Naive thymus-derived CD4-positive, alpha-beta T cell (primary cell): ENCODE measurements at regions of chr11 and their contacts with region 1.

Region 1: DNA sequence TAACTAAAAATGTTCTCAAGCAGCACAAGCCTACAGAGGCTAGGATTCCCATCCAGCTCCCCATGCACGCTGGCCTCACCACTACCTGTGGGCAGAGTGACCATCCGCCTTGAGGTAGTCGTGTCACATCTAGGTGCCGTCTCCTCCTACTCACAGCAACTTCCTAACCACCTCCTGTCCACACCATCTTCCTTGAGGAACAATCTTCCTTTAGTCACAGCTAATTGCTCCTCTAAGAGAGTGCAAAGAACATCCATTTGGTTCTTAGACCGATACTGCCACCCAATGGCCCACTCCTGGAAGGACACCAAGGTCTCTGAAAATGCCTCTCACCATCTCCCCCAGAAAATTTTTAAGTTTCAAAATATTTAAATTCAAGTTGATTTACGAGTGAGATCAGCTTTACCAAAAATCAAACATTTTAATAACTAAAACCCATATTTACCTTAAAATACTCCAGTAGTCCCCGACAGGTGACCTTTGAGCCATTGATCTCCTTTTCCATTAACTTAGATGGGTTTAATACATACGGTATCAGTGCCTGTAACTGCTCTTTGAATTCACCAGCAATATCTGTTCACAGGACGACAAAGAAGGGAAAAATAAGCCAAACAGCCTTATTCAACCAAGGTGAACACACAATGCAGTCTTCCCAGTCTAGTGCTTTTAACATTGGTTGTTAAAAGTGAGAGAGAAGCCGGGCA is 21.7 kb upstream of the PLAAT3 start:
- DNase-seq: peak; percentile 45 to 76 (median 70)
- ATAC-seq: peak; percentile 88
- H3K4me3 ChIP-seq: no peak overlapping the region
- H3K4me3 Mint-ChIP-seq: no peak overlapping the region
- H3K27ac ChIP-seq: no peak overlapping the region
- H3K27ac Mint-ChIP-seq: no peak overlapping the region
- H3K4me1 ChIP-seq: no peaks in the 10 kb centered on the region
- H3K4me1 Mint-ChIP-seq: peaks cover 7 to 22% (median 16%) of the 10 kb centered on the region in 7 donors
- H3K27me3 ChIP-seq: no peaks in the 10 kb centered on the region
- H3K27me3 Mint-ChIP-seq: no peaks in the 10 kb centered on the region

Region 2: DNA sequence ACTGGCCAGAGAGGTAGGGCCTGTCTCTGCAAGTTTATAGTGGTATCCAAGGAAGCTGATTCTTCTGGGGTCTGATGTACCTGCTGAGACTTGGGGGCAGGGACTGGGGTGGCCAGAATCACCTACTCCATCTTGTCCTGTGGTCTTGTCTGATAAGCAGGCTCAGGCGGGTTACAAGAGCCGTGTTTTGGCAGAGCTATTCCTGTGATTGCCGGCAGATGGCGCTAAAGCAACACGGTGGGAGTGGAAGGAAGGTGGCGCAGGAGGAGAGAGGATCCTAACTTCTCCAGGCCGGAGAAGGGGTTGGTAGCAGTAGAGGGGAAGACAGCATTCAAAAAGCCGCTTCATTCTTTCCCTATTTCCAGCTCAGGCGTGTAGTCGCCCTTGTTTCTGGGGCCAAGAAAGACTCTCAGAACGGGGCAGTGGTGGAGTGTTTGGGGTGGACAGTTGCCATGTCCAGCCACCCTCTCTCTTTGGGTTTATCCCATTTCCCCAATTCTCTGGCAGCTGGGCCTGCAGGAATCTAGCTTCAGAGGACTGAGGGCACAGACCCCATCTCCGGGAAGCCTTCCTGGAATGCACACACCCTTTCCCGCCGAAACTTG is 729.9 kb before region 1 on chr11:
- CTCF ChIA-PET with region 1: no interaction called
- POLR2A ChIA-PET with region 1: no interaction called
- intact Hi-C with region 1: loop called in 1 of 2 experiments (anchors 5 kb)
- DNase-seq: peak; percentile 44 to 80 (median 63)
- ATAC-seq: peak; percentile 86
- H3K4me3 ChIP-seq: no peak overlapping the region
- H3K4me3 Mint-ChIP-seq: peak overlapping the region in 1 of 10 donors; percentile 2
- H3K27ac ChIP-seq: no peak overlapping the region
- H3K27ac Mint-ChIP-seq: no peak overlapping the region
- H3K4me1 ChIP-seq: no peaks in the 10 kb centered on the region
- H3K4me1 Mint-ChIP-seq: peaks cover 0 to 18% (median 0%) of the 10 kb centered on the region in 7 donors
- H3K27me3 ChIP-seq: no peaks in the 10 kb centered on the region
- H3K27me3 Mint-ChIP-seq: peaks cover 0 to 23% (median 5%) of the 10 kb centered on the region in 5 donors

Region 3: DNA sequence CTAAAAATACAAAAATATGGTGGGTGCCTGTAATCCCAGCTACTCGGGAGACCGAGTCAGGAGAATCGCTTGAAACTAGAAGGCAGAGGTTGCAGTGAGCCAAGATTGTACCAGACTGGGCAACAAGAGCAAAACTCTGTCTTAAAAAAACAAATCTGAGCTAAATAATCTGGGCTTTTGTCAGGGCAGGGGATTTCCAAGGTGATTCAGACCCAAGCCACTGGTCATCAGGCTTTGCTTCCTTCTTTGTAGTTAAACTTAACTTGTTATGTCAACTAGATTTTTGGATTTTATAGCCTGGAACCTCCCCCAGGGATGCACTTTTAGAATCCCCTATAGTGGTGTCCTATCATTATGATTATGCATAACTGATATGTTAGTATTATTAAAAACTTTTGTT is 593.3 kb before region 1 on chr11:
- CTCF ChIA-PET with region 1: no interaction called
- POLR2A ChIA-PET with region 1: no interaction called
- intact Hi-C with region 1: loop called in 1 of 2 experiments (anchors 5 kb)
- DNase-seq: no peak
- ATAC-seq: no peak
- H3K4me3 ChIP-seq: no peak overlapping the region
- H3K4me3 Mint-ChIP-seq: no peak overlapping the region
- H3K27ac ChIP-seq: no peak overlapping the region
- H3K27ac Mint-ChIP-seq: no peak overlapping the region
- H3K4me1 ChIP-seq: no peaks in the 10 kb centered on the region
- H3K4me1 Mint-ChIP-seq: no peaks in the 10 kb centered on the region
- H3K27me3 ChIP-seq: no peaks in the 10 kb centered on the region
- H3K27me3 Mint-ChIP-seq: peaks cover 15 to 28% (median 23%) of the 10 kb centered on the region in 5 donors

Region 4: DNA sequence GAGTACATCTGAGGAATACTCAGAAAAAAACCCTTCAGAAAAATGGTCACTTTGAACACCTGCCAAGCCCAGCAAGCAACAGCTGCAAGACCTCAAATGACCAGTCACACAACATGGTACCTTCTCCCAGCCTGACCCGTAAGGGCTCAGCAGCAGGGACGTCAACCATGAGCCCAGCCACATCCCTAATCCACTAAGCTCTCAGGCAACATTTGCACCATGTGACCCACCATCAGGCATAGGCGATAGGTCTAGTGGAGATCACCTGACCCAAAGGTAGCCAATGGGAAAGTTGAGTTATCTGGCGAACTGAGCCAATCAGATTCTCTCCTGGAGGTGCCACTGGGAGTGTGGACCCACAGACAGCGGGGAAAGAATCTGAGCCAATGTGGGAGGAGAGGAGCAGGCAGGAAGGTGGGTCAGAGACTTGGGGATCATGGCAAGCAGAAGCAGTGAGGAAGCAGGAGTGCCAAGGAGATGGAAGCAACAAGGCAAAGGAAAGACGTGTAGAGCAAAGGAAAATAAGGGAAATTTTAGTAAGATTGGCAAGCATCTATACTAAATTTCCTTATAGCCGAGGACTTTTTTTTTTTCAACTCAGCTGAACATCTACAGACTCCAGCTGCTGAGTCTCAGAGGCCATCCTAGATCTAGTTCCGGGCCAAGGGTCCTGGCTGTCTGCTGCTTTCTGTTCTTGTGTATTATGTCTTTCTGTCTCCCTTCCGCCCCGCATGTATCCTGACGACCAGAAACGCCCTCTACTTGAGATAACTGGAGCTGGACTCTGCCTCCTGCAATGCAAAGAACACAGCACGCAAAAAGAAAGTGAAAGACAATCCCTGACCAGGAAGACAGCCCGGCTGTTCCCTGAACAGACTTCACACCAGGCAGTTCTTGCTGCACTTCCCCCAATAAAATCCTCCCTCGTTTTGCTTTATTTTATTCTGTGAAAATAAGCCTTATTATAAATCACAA is 61.7 kb before region 1 on chr11:
- CTCF ChIA-PET with region 1: interaction called, 3 read pairs
- POLR2A ChIA-PET with region 1: no interaction called
- intact Hi-C with region 1: loop called in 1 of 2 experiments (anchors 5 kb)
- DNase-seq: peak in 4 of 9 donors; percentile 30 to 41 (median 35)
- ATAC-seq: peak; percentile 82
- H3K4me3 ChIP-seq: peak overlapping the region; percentile 43
- H3K4me3 Mint-ChIP-seq: peak overlapping the region; percentile 77 to 95 (median 88)
- H3K27ac ChIP-seq: peak overlapping the region; percentile 33
- H3K27ac Mint-ChIP-seq: peak overlapping the region; percentile 81 to 99 (median 93)
- H3K4me1 ChIP-seq: peaks cover 12 to 13% of the 10 kb centered on the region in 2 donors
- H3K4me1 Mint-ChIP-seq: peaks cover 18 to 40% (median 30%) of the 10 kb centered on the region in 7 donors
- H3K27me3 ChIP-seq: no peaks in the 10 kb centered on the region
- H3K27me3 Mint-ChIP-seq: peaks cover 0 to 19% (median 0%) of the 10 kb centered on the region in 5 donors

Region 5: DNA sequence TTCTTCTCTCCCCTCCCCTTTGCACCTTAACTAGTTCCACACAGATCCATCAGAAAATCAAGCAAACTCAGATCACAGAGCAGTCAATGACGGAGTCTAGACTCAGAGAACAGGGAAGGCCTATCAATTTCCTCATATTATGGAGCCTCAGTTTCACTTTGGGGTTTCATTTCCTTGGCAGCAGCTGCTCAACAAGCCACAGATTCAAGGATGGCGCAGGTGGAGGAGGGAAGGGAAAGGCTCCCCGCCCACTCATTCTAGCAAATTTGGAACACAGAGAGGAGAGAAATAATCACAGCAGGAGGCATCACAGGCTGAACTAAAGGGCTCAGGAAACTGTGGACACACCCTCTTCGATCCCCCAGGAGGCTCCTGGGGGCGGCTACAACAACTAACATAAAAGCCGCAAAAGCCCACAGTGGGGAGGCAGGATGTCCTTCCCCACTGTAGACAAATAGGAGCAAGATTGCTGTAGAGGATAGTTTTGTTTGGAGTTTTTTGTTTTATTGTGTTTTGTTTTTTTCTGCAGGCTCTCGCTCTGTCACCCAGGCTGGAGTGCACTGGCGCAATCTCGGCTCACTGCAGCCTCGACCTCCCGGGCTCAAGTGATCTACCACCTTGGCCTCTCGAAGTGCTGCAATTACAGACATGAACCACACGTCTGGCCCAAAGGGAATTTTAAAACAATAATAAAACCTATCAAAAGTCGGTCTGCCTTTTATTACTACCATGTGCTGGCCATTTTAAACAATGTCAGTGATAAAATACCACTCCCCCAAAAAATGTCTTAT is 25.1 kb before region 1 on chr11:
- CTCF ChIA-PET with region 1: no interaction called
- POLR2A ChIA-PET with region 1: no interaction called
- intact Hi-C with region 1: no loop called
- DNase-seq: no peak
- ATAC-seq: no peak
- H3K4me3 ChIP-seq: no peak overlapping the region
- H3K4me3 Mint-ChIP-seq: no peak overlapping the region
- H3K27ac ChIP-seq: no peak overlapping the region
- H3K27ac Mint-ChIP-seq: peak overlapping the region in 3 of 9 donors; percentile 13 to 62 (median 23)
- H3K4me1 ChIP-seq: peaks cover 0 to 3% of the 10 kb centered on the region in 2 donors
- H3K4me1 Mint-ChIP-seq: peaks cover 0 to 27% (median 12%) of the 10 kb centered on the region in 7 donors
- H3K27me3 ChIP-seq: no peaks in the 10 kb centered on the region
- H3K27me3 Mint-ChIP-seq: peaks cover 0 to 31% (median 0%) of the 10 kb centered on the region in 5 donors

Region 6: GRCh38 chr11:63738720-63739360 is 102.9 kb after region 1 on chr11:
- CTCF ChIA-PET with region 1: interaction called, 11 read pairs
- POLR2A ChIA-PET with region 1: no interaction called
- intact Hi-C with region 1: loop called (anchors 1 to 2 kb)
- DNase-seq: peak in 8 of 9 donors; percentile 23 to 64 (median 46)
- ATAC-seq: peak; percentile 70
- H3K4me3 ChIP-seq: no peak overlapping the region
- H3K4me3 Mint-ChIP-seq: no peak overlapping the region
- H3K27ac ChIP-seq: no peak overlapping the region
- H3K27ac Mint-ChIP-seq: peak overlapping the region in 3 of 9 donors; percentile 29 to 67 (median 45)
- H3K4me1 ChIP-seq: no peaks in the 10 kb centered on the region
- H3K4me1 Mint-ChIP-seq: peaks cover 3 to 8% (median 4%) of the 10 kb centered on the region in 7 donors
- H3K27me3 ChIP-seq: no peaks in the 10 kb centered on the region
- H3K27me3 Mint-ChIP-seq: no peaks in the 10 kb centered on the region